Activated naive CD4-positive, alpha-beta T cell treated with anti-CD3 and anti-CD28 coated beads for 36 hours (primary cell): ENCODE measurements at regions of chr1 and their contacts with region 1.

Region 1: GRCh38 chr1:246608616-246609376 is 42.5 kb downstream of the CNST start:
- DNase-seq: peak; percentile 49
- H3K4me3 Mint-ChIP-seq: no peak overlapping the region
- H3K27ac Mint-ChIP-seq: peak overlapping the region; percentile 33
- H3K4me1 Mint-ChIP-seq: peaks cover 51% of the 10 kb centered on the region
- H3K27me3 Mint-ChIP-seq: no peaks in the 10 kb centered on the region

Region 2: GRCh38 chr1:246532519-246532918 is 76.3 kb before region 1 on chr1:
- CTCF ChIA-PET with region 1: no interaction called
- intact Hi-C with region 1: no loop called
- DNase-seq: no peak
- H3K4me3 Mint-ChIP-seq: no peak overlapping the region
- H3K27ac Mint-ChIP-seq: no peak overlapping the region
- H3K4me1 Mint-ChIP-seq: no peaks in the 10 kb centered on the region
- H3K27me3 Mint-ChIP-seq: no peaks in the 10 kb centered on the region

Region 3: DNA sequence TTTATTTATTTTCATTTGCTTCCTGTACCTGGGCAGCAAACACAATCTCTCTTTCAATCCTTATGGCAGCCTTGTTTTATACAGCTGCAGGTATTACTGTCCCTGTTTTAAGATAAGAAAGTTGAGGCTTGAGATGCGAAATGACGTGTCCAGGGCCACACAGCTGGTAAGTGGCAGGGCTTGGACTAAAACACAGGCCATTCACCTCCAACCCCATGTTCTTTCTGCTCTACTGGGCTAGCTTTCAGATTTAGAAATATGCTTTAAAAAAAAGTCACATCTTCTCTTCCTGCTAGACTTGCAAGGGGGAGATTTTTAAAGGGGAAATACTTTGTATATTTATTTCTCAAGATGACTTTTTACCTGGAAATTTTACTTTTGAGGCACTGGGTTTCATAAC is 20.2 kb after region 1 on chr1:
- CTCF ChIA-PET with region 1: interaction called, 4 read pairs
- intact Hi-C with region 1: loop called (anchors 2 kb)
- DNase-seq: no peak
- H3K4me3 Mint-ChIP-seq: no peak overlapping the region
- H3K27ac Mint-ChIP-seq: peak overlapping the region; percentile 31
- H3K4me1 Mint-ChIP-seq: peaks cover 18% of the 10 kb centered on the region
- H3K27me3 Mint-ChIP-seq: no peaks in the 10 kb centered on the region

Region 4: GRCh38 chr1:246667773-246668172 is 59.0 kb after region 1 on chr1:
- CTCF ChIA-PET with region 1: no interaction called
- intact Hi-C with region 1: no loop called
- DNase-seq: no peak
- H3K4me3 Mint-ChIP-seq: no peak overlapping the region
- H3K27ac Mint-ChIP-seq: no peak overlapping the region
- H3K4me1 Mint-ChIP-seq: no peaks in the 10 kb centered on the region
- H3K27me3 Mint-ChIP-seq: no peaks in the 10 kb centered on the region

Region 5: GRCh38 chr1:246748880-246749279 is 140.1 kb after region 1 on chr1:
- CTCF ChIA-PET with region 1: no interaction called
- intact Hi-C with region 1: no loop called
- DNase-seq: no peak
- H3K4me3 Mint-ChIP-seq: no peak overlapping the region
- H3K27ac Mint-ChIP-seq: no peak overlapping the region
- H3K4me1 Mint-ChIP-seq: no peaks in the 10 kb centered on the region
- H3K27me3 Mint-ChIP-seq: no peaks in the 10 kb centered on the region

Region 6: GRCh38 chr1:246769306-246769705 is 160.5 kb after region 1 on chr1:
- CTCF ChIA-PET with region 1: no interaction called
- intact Hi-C with region 1: no loop called
- DNase-seq: no peak
- H3K4me3 Mint-ChIP-seq: no peak overlapping the region
- H3K27ac Mint-ChIP-seq: no peak overlapping the region
- H3K4me1 Mint-ChIP-seq: no peaks in the 10 kb centered on the region
- H3K27me3 Mint-ChIP-seq: no peaks in the 10 kb centered on the region